CD4-positive, alpha-beta memory T cell (primary cell): ENCODE measurements at regions of chrX and their contacts with region 1.

Region 1: DNA sequence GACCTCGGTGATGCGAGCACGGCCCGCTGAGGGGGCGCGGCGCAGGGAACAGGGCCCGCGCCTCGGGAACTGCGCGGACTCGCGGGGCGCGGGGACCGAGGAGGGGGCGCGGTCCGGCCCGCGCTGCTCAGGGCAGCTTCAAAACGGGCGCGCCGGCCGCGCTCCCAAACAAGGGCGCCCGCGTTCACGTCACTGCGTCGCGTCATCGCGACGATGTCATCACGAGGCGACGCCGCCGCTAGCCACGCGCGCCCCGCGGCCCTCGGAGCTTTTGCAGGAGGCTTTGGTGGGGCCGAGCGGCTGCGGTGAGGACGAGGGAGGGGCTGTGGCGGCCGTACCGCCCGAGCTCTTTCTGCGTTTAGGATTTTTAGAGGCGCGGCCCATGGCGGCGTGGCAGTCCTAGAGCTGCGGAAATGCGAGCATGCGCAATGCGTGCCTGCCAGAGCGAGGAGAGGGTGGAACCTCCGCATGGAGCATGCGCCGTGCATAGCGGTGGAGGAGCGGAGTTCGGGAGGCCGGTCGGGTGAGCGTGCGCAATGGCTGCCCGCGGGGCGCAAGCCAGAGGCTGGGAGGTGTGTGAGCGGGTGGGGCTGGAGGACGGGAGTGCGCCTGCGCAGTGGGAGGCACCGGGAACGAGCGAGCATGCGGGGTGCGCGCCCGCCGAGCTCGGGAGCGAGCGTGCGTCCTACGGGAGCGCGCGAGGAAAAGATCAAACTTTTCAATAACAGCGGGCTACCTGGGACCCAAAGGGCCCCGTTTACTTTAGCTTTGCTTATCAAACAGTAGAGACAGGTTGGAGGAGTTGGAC is at the start of gene PPP2R3B:
- DNase-seq: peak; percentile 98 to 100 (median 99)
- H3K4me3 ChIP-seq: peak within 1 kb of the TSS; percentile 29 to 99
- H3K4me3 Mint-ChIP-seq: peak within 1 kb of the TSS; percentile 85 to 96 (median 91)
- H3K27ac ChIP-seq: peak within 1 kb of the TSS; percentile 100
- H3K27ac Mint-ChIP-seq: peak within 1 kb of the TSS; percentile 92 to 100 (median 98)
- H3K4me1 ChIP-seq: peaks cover 6% of the 10 kb centered on the region
- H3K4me1 Mint-ChIP-seq: peaks cover 9 to 11% (median 10%) of the 10 kb centered on the region in 4 donors
- H3K27me3 ChIP-seq: no peaks in the 10 kb centered on the region
- H3K27me3 Mint-ChIP-seq: peaks cover 0 to 1% of the 10 kb centered on the region in 2 donors
- total RNA-seq, gene PPP2R3B: 42.3 to 45.2 TPM

Region 2: GRCh38 chrX:357693-358471 is 29.1 kb before region 1 on chrX:
- CTCF ChIA-PET with region 1: no interaction called
- POLR2A ChIA-PET with region 1: no interaction called
- intact Hi-C with region 1: loop called (anchors 1 kb)
- DNase-seq: peak; percentile 51 to 67 (median 63)
- H3K4me3 ChIP-seq: no peak overlapping the region
- H3K4me3 Mint-ChIP-seq: peak overlapping the region; percentile 21 to 73 (median 52)
- H3K27ac ChIP-seq: peak overlapping the region; percentile 3
- H3K27ac Mint-ChIP-seq: peak overlapping the region; percentile 73 to 97 (median 94)
- H3K4me1 ChIP-seq: peaks cover 15% of the 10 kb centered on the region
- H3K4me1 Mint-ChIP-seq: peaks cover 17 to 30% (median 21%) of the 10 kb centered on the region in 4 donors
- H3K27me3 ChIP-seq: no peaks in the 10 kb centered on the region
- H3K27me3 Mint-ChIP-seq: no peaks in the 10 kb centered on the region